ENCODE measurements at regions of chr10 and their contacts with region 1.

Region 1: GRCh38 chr10:65358565-65358964 is 1567.3 kb upstream of the LRRTM3 start:
- DNase-seq: peak; percentile 45
- H3K4me3 Mint-ChIP-seq: no peak overlapping the region
- H3K27ac Mint-ChIP-seq: no peak overlapping the region
- H3K4me1 Mint-ChIP-seq: no peaks in the 10 kb centered on the region
- H3K27me3 Mint-ChIP-seq: no peaks in the 10 kb centered on the region
- CTCF ChIP-seq: peak; percentile 48

Region 2: DNA sequence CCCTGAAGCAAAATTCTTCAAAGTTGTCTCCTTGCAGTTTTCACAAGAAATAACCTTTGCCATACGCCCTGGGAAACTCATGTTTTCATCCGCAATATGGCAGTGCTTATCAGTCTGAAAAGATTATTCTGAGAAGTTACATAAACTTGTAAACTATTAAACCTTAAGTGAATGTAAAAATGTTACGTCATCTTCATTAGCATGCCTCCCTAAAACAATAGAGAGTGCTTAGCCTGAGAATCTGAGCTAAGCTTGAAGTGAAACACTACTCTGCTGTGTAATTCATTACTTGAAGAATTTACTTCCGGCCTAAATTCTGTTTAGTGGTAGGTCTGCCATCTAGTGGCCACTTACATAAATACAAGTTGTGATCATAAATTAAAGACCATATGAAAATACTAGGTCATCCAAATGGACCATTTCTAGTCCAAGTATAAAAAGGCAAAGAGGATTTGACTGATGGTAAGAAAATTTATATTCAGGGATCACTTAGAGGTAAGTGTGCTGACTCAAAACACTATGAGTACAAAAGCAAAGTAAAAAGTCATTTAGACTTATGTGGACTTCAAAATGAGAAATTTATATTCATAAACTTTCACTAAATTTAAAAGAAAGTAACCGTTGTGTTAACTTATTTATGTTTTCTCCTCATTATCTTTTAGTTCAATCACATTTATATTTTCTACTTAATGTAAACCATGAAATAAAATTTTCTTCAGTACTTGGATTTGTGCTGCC is 822.2 kb after region 1 on chr10:
- CTCF ChIA-PET with region 1: interaction called, 3 read pairs
- POLR2A ChIA-PET with region 1: no interaction called
- intact Hi-C with region 1: loop called (anchors 2 kb)
- DNase-seq: peak; percentile 68
- H3K4me3 Mint-ChIP-seq: no peak overlapping the region
- H3K27ac Mint-ChIP-seq: no peak overlapping the region
- H3K4me1 Mint-ChIP-seq: no peaks in the 10 kb centered on the region
- H3K27me3 Mint-ChIP-seq: no peaks in the 10 kb centered on the region
- CTCF ChIP-seq: peak; percentile 59